ENCODE measurements at regions of chr17 and their contacts with region 1.

Region 1: DNA sequence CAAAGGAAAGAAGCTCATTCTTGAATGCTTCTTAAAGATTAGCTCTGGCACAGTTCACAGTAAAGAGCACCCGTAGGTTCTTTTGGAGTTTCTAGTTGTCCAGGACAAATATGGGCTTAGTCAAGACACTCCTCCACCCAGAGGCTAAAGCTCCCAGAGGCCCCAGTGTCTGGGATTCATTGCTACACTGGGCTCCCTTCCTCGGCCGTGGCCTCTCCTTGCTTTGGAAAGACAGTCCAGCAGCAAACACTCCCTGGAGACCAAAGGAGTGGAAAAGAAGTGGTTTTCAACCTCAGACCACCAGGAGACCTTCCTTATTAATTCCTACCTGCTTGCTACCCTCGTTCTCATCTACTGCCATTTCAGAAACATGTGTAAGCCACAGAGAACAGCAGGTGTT is 17.1 kb downstream of the PHB1 start:
- DNase-seq: no peak
- H3K4me3 ChIP-seq: no peak overlapping the region
- H3K4me3 Mint-ChIP-seq: no peak overlapping the region
- H3K27ac ChIP-seq: no peak overlapping the region
- H3K27ac Mint-ChIP-seq: no peak overlapping the region
- H3K4me1 ChIP-seq: peaks cover 5% of the 10 kb centered on the region
- H3K4me1 Mint-ChIP-seq: peaks cover 19 to 22% (median 21%) of the 10 kb centered on the region in 3 donors
- H3K27me3 ChIP-seq: no peaks in the 10 kb centered on the region
- H3K27me3 Mint-ChIP-seq: peaks cover 0 to 2% of the 10 kb centered on the region in 2 donors

Region 2: DNA sequence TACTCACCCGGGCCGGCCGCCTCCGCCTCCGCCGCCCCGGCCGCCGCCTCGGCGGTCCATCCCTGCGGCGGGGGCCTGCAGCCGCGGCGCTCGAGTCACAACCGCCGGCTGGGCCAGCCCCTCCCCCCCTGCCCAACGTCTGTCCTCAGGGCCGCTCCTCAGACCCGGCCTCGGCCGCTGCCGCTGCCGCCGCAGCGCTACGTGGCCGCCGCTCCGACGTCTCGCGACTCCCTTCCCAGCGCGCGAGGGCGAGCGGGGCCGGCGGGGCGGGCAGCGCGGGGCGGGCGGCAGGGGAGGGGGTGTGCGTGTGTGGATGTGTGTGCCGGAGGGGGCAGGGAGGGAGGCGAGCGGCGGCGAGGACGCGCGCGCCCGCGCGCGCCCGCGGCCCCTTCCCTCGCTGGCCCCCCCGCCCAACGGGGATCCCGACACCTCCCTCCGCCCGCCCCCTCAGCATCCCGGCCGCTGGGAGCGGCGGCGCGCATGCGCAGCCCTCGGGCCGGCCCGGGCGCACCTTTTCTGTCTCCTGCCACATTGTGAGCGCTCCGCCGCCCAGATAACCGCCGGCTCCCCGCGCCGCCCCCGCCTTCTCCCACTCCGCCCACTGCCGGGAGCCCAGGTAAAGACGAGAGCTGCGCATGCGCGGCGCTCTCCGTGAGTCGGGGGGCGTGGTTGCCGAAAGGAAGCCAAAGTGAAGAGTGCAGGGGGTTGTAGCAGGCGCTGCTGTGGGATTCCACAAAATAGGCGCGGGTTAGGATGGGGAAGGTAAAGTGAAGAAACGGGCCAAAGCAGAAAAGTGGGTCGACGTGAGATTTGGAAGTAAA is 35.5 kb before region 1 on chr17 and contains the start of gene ZNF652:
- CTCF ChIA-PET with region 1: interaction called, 22 read pairs
- POLR2A ChIA-PET with region 1: interaction called, 10 read pairs
- DNase-seq: peak; percentile 88 to 98 (median 96)
- H3K4me3 ChIP-seq: peak within 1 kb of the TSS; percentile 70
- H3K4me3 Mint-ChIP-seq: peak within 1 kb of the TSS; percentile 92 to 99 (median 95)
- H3K27ac ChIP-seq: peak within 1 kb of the TSS; percentile 56
- H3K27ac Mint-ChIP-seq: peak within 1 kb of the TSS; percentile 94 to 100 (median 98)
- H3K4me1 ChIP-seq: peaks cover 55% of the 10 kb centered on the region
- H3K4me1 Mint-ChIP-seq: peaks cover 61 to 69% (median 65%) of the 10 kb centered on the region in 3 donors
- H3K27me3 ChIP-seq: no peaks in the 10 kb centered on the region
- H3K27me3 Mint-ChIP-seq: peaks cover 0 to 2% of the 10 kb centered on the region in 2 donors
- total RNA-seq, gene ZNF652: 11.5 to 11.9 TPM

Region 3: GRCh38 chr17:49370971-49371834 is 26.4 kb before region 1 on chr17:
- CTCF ChIA-PET with region 1: interaction called, 22 read pairs
- POLR2A ChIA-PET with region 1: no interaction called
- DNase-seq: no peak
- H3K4me3 ChIP-seq: no peak overlapping the region
- H3K4me3 Mint-ChIP-seq: no peak overlapping the region
- H3K27ac ChIP-seq: no peak overlapping the region
- H3K27ac Mint-ChIP-seq: peak overlapping the region in 1 of 8 donors; percentile 26
- H3K4me1 ChIP-seq: no peaks in the 10 kb centered on the region
- H3K4me1 Mint-ChIP-seq: peaks cover 13 to 20% (median 14%) of the 10 kb centered on the region in 3 donors
- H3K27me3 ChIP-seq: no peaks in the 10 kb centered on the region
- H3K27me3 Mint-ChIP-seq: no peaks in the 10 kb centered on the region

Region 4: GRCh38 chr17:49407981-49408501 is 10.5 kb after region 1 on chr17:
- CTCF ChIA-PET with region 1: interaction called, 20 read pairs
- POLR2A ChIA-PET with region 1: no interaction called
- DNase-seq: peak; percentile 72 to 87 (median 77)
- H3K4me3 ChIP-seq: no peak overlapping the region
- H3K4me3 Mint-ChIP-seq: peak overlapping the region in 4 of 7 donors; percentile 17 to 63 (median 25)
- H3K27ac ChIP-seq: no peak overlapping the region
- H3K27ac Mint-ChIP-seq: peak overlapping the region; percentile 46 to 86 (median 58)
- H3K4me1 ChIP-seq: peaks cover 29% of the 10 kb centered on the region
- H3K4me1 Mint-ChIP-seq: peaks cover 30 to 49% (median 38%) of the 10 kb centered on the region in 3 donors
- H3K27me3 ChIP-seq: no peaks in the 10 kb centered on the region
- H3K27me3 Mint-ChIP-seq: peaks cover 0 to 2% of the 10 kb centered on the region in 2 donors

Region 5: GRCh38 chr17:49575579-49576087 is 178.0 kb after region 1 on chr17 and contains the start of gene NXPH3:
- CTCF ChIA-PET with region 1: no interaction called
- POLR2A ChIA-PET with region 1: no interaction called
- DNase-seq: peak; percentile 38 to 66 (median 55)
- H3K4me3 ChIP-seq: peak within 1 kb of the TSS; percentile 34
- H3K4me3 Mint-ChIP-seq: peak within 1 kb of the TSS in 6 of 7 donors; percentile 53 to 88 (median 67)
- H3K27ac ChIP-seq: no peak within 1 kb of the TSS
- H3K27ac Mint-ChIP-seq: no peak within 1 kb of the TSS
- H3K4me1 ChIP-seq: peaks cover 15% of the 10 kb centered on the region
- H3K4me1 Mint-ChIP-seq: peaks cover 0 to 27% (median 11%) of the 10 kb centered on the region in 3 donors
- H3K27me3 ChIP-seq: peaks cover 23% of the 10 kb centered on the region
- H3K27me3 Mint-ChIP-seq: peaks cover 49 to 55% of the 10 kb centered on the region in 2 donors
- total RNA-seq, gene NXPH3: 0.31 to 0.44 TPM